ENCODE measurements at regions of chr20 and their contacts with region 1.

Region 1: DNA sequence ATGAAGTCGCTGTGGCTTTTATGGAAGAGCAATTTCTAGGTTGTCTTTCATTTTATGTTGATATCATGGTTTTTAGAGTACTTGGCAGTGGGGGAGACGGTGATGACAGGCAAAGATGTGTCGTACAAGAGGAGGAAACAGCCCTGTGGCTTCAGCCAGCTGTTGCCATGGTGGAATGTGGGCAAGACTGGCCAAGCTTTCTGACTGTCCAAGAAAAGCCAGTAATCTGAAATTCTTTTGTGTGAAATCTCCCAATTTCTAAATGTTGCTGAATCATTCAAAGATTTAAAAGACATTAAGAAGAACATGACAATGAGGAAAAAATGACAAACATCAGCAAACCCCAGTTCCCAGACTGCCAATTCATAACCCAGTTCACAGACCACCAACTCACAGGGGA is 23.1 kb downstream of the PFDN4 start:
- DNase-seq: no peak
- ATAC-seq: no peak
- H3K4me3 ChIP-seq: no peak overlapping the region
- H3K27ac ChIP-seq: no peak overlapping the region
- H3K4me1 ChIP-seq: no peaks in the 10 kb centered on the region
- H3K27me3 ChIP-seq: no peaks in the 10 kb centered on the region
- CTCF ChIP-seq: no peak
- EP300 ChIP-seq: no peak
- POLR2A ChIP-seq: no peak
- RAD21 ChIP-seq: no peak

Region 2: DNA sequence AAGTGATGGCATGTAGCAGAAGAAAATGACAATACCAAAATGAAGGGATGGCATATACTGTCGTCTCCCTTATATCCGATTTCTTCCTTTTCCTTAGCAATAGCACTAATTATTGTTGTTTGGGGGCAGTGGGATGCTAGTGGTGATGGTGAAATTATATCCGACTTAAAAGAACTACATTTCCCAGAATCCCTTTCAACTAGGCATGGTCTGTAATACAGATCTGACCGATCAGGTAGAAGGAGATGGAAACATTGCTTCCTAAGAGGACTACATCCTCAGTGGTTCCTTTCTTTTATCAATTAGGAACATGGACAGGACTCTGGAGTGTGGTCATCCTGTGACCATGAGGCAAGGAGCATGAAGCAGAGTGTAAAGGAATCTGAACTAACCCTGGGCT is 1241.7 kb after region 1 on chr20:
- CTCF ChIA-PET with region 1: no interaction called
- POLR2A ChIA-PET with region 1: no interaction called
- in situ Hi-C with region 1: loop called (anchors 10 kb)
- intact Hi-C with region 1: no loop called
- DNase-seq: no peak
- ATAC-seq: no peak
- H3K4me3 ChIP-seq: no peak overlapping the region
- H3K27ac ChIP-seq: no peak overlapping the region
- H3K4me1 ChIP-seq: no peaks in the 10 kb centered on the region
- H3K27me3 ChIP-seq: no peaks in the 10 kb centered on the region
- CTCF ChIP-seq: no peak
- EP300 ChIP-seq: no peak
- POLR2A ChIP-seq: no peak
- RAD21 ChIP-seq: no peak

Measured in K562 (cell line).